Transverse colon (tissue), 4 donors: ENCODE measurements at regions of chr20 and their contacts with region 1.

Region 1: DNA sequence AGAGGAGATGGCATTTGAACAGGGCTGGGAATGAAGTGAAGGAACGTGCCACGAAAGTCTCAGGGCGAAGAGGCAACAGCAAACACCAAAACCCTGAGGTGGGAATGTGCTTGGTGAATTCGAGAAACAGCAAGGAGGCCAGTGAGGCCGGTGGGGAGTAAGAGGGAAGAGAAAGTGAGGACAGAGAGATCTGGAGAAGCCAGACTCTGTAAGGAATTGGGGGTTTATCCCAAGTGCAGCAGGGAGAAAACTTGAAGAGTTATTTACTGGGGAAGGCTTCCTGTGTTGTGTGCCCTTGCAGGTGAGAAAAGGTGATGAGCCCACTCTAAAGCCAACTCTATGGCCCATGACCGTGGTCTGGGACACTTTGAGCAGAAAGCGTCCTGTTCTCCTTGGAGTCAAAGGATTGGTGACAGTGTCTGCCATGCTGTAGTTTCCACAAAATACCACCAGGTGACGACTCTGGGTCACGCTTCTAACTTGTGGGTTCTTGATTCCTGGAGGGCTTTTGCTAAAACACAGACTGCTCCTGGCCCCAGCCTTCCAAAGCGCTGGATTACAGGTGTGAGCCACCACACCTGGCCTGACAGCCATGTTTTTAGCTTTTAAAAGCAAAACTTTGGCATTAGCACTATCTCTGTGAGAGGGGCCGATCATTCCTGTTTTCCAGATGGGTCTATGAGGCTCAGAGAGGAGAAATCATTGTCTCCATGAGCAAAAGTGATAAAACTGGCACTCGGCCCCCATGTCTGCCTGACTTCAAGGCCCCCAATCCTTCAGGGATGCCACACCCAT is 18.0 kb upstream of the CSNK2A1 start:
- DNase-seq: peak; percentile 64
- H3K4me3 ChIP-seq: no peak overlapping the region
- H3K27ac ChIP-seq: no peak overlapping the region
- H3K4me1 ChIP-seq: no peaks in the 10 kb centered on the region
- H3K27me3 ChIP-seq: peaks cover 42% of the 10 kb centered on the region
- CTCF ChIP-seq: peak; percentile 95 to 99 (median 96)
- EP300 ChIP-seq: no peak
- POLR2A ChIP-seq: no peak

Region 2: DNA sequence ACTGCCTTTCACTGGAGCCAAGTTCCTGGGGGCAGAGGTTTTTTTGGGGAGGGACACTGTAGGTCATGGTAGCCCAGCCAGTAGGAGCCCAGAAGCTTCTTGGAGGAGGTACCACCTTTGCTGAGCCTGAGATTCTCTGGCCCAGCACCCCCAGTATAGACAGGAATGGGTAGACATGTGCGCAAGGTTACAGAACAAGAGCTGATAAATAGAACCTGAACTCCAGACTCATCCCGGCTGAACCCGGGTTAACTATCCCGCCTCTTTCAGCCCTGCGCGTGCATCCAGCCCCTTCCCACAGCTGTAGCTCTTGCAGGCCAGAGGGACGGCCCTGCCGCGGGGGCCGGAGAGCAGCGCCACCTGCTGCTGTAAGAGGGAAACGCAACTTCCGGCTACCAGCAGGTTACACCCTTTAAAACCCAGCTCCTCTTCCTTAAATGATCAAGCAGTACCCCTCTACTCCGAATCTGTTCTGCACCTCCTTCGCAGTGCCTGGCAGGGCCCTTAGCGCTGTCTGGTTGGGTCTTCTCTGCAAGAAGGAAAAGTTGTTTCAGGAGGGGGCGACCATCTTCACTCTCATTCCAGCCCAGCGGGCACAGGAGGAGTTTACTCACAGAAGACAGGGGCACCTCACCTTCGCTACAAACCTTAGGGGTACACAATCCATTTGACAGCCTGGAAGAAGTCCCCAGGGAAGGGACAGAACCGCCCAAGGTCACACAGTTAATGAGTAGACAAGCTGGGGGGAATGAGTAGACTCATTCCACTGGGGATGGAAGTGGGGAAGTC is 83.9 kb after region 1 on chr20:
- in situ Hi-C with region 1: loop called in 3 of 4 experiments (anchors 10 kb)
- intact Hi-C with region 1: no loop called
- DNase-seq: peak; percentile 74
- H3K4me3 ChIP-seq: no peak overlapping the region
- H3K27ac ChIP-seq: no peak overlapping the region
- H3K4me1 ChIP-seq: peaks cover 0 to 9% (median 2%) of the 10 kb centered on the region in 4 donors
- H3K27me3 ChIP-seq: peaks cover 11% of the 10 kb centered on the region
- CTCF ChIP-seq: peak; percentile 84 to 96 (median 92)
- EP300 ChIP-seq: no peak
- POLR2A ChIP-seq: no peak

Region 3: DNA sequence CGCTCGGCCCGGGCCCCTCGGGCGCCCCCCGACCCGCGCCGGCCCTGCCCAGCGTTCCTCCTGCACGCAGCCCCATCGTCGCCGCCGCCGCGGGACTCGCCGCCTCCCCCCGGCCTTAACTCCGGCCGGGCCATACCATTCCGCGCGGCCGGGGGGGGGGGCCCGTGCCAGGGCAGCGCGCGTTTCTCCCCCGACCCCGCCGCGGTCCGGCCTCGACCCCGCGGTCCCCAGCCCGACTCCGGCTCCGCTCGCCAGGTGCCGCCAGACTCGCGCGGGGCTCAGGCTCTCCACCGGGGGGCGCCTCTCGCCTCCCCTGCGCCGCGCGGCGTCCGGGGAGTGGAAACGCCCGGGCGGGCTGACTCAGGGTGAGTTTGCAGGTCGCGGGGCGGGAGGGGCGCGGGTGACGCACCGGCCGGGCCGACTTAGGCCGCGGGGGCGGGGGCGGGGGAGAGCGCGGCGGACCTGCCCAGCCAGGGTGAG is 91.5 kb after region 1 on chr20 and contains the start of gene SRXN1:
- in situ Hi-C with region 1: loop called in 3 of 4 experiments (anchors 10 kb)
- intact Hi-C with region 1: no loop called
- DNase-seq: peak; percentile 93
- H3K4me3 ChIP-seq: peak within 1 kb of the TSS; percentile 43 to 80 (median 74)
- H3K27ac ChIP-seq: peak within 1 kb of the TSS; percentile 76 to 89 (median 81)
- H3K4me1 ChIP-seq: peaks cover 0 to 22% (median 12%) of the 10 kb centered on the region in 4 donors
- H3K27me3 ChIP-seq: peaks cover 4% of the 10 kb centered on the region
- CTCF ChIP-seq: peak in 4 of 5 experiments; percentile 17 to 58 (median 30)
- EP300 ChIP-seq: no peak
- POLR2A ChIP-seq: no peak
- total RNA-seq, gene SRXN1: 8.6 to 43.0 (median 21.2) TPM

Region 4: GRCh38 chr20:728248-728944 is 166.8 kb after region 1 on chr20:
- in situ Hi-C with region 1: loop called (anchors 10 to 25 kb)
- intact Hi-C with region 1: no loop called
- DNase-seq: peak; percentile 22
- H3K4me3 ChIP-seq: peak overlapping the region in 2 of 4 donors; percentile 32 to 47
- H3K27ac ChIP-seq: no peak overlapping the region
- H3K4me1 ChIP-seq: peaks cover 0 to 9% (median 7%) of the 10 kb centered on the region in 4 donors
- H3K27me3 ChIP-seq: peaks cover 73% of the 10 kb centered on the region
- CTCF ChIP-seq: peak in 4 of 5 experiments; percentile 25 to 48 (median 34)
- EP300 ChIP-seq: no peak
- POLR2A ChIP-seq: no peak

Region 5: GRCh38 chr20:733861-734260 is 172.2 kb after region 1 on chr20:
- in situ Hi-C with region 1: loop called (anchors 10 to 25 kb)
- intact Hi-C with region 1: loop called (anchors 2 kb)
- DNase-seq: no peak
- H3K4me3 ChIP-seq: no peak overlapping the region
- H3K27ac ChIP-seq: no peak overlapping the region
- H3K4me1 ChIP-seq: no peaks in the 10 kb centered on the region
- H3K27me3 ChIP-seq: peaks cover 33% of the 10 kb centered on the region
- CTCF ChIP-seq: no peak
- EP300 ChIP-seq: no peak
- POLR2A ChIP-seq: no peak